ENCODE measurements at regions of chr15 and their contacts with region 1.

Region 1: GRCh38 chr15:85330901-85331588 is 49.4 kb upstream of the AKAP13 start:
- H3K4me3 ChIP-seq: no peak overlapping the region
- H3K27ac ChIP-seq: no peak overlapping the region
- H3K4me1 ChIP-seq: 0 out of 2 replicates have a peak, but pooled peaks cover 2% of the 10 kb centered on the region
- CTCF ChIP-seq: peak; percentile 27; the same call in 1 of the 2 replicates

Region 2: GRCh38 chr15:84855136-84855535 is 475.9 kb before region 1 on chr15:
- CTCF ChIA-PET with region 1: no interaction called
- POLR2A ChIA-PET with region 1: no interaction called
- H3K4me3 ChIP-seq: no peak overlapping the region
- H3K27ac ChIP-seq: no peak overlapping the region
- H3K4me1 ChIP-seq: no peaks in the 10 kb centered on the region
- CTCF ChIP-seq: no peak

Region 3: GRCh38 chr15:84981054-84981710 is 349.9 kb before region 1 on chr15:
- CTCF ChIA-PET with region 1: no interaction called
- POLR2A ChIA-PET with region 1: no interaction called
- H3K4me3 ChIP-seq: peak overlapping the region; percentile 76
- H3K27ac ChIP-seq: peak overlapping the region; percentile 77
- H3K4me1 ChIP-seq: peaks cover 21% of the 10 kb centered on the region
- CTCF ChIP-seq: peak; percentile 95

Region 4: GRCh38 chr15:85312486-85312885 is 18.6 kb before region 1 on chr15:
- CTCF ChIA-PET with region 1: interaction called, 16 read pairs
- POLR2A ChIA-PET with region 1: interaction called, 3 read pairs
- H3K4me3 ChIP-seq: no peak overlapping the region
- H3K27ac ChIP-seq: no peak overlapping the region
- H3K4me1 ChIP-seq: 0 out of 2 replicates have a peak, but pooled peaks cover 4% of the 10 kb centered on the region
- CTCF ChIP-seq: no peak

Region 5: DNA sequence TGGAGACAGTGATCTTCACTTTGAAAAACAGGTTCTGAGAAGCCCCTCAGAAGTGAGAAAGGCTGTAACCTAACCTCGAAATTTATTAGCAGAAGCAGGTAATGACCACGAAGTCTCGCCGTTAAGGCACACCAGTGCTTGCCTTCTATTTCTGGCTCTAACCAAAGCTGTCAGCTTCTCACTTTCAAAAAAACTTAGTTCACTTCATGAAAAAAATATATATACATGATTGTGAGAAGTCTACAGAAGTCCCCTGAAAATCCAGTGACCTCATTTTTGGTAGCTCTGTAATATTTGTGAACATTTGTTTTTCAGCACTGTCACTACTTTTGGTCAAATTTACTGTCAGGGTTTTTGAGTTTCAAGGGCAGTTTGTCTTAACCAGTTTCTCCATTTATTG is 30.3 kb after region 1 on chr15:
- CTCF ChIA-PET with region 1: interaction called, 11 read pairs
- POLR2A ChIA-PET with region 1: no interaction called
- H3K4me3 ChIP-seq: no peak overlapping the region
- H3K27ac ChIP-seq: no peak overlapping the region
- H3K4me1 ChIP-seq: no peaks in the 10 kb centered on the region; the same call in 1 of the 2 replicates
- CTCF ChIP-seq: no peak

Region 6: DNA sequence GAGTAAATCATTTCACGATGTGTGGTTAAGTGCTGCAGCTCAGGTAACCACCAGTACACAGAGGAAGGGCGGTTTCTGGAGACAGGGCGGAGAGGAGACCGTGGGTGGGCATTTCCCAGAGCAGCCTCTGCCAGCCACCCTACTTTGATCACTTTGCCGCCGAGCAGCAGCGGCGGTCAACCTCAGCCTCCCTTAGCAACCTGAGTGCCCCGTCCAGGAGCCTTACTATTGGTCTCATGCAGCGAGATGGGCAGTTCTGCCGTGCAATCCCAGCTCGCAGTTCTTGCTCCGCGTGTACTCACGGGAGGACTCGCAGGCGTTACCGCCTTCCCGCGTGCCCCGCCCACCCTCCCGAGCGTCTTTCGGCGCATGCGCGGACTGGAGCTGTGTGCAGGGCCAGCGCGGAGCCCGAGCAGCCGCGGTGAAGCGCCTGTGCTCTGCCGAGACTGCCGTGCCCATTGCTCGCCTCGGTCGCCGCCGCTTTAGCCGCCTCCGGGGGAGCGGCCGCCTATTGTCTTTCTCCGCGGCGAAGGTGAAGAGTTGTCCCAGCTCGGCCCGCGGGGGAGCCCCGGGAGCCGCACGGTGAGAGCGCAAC is 49.3 kb after region 1 on chr15 and contains the start of gene AKAP13:
- CTCF ChIA-PET with region 1: interaction called, 6 read pairs
- POLR2A ChIA-PET with region 1: interaction called, 12 read pairs
- H3K4me3 ChIP-seq: peak within 1 kb of the TSS; percentile 82
- H3K27ac ChIP-seq: peak within 1 kb of the TSS; percentile 83
- H3K4me1 ChIP-seq: peaks cover 20% of the 10 kb centered on the region
- CTCF ChIP-seq: no peak

Region 7: GRCh38 chr15:85402195-85402881 is 71.3 kb after region 1 on chr15:
- CTCF ChIA-PET with region 1: interaction called, 117 read pairs
- POLR2A ChIA-PET with region 1: no interaction called
- H3K4me3 ChIP-seq: no peak overlapping the region
- H3K27ac ChIP-seq: no peak overlapping the region; the same call in 1 of the 2 replicates
- H3K4me1 ChIP-seq: peaks cover 55% of the 10 kb centered on the region
- CTCF ChIP-seq: no peak

Region 8: GRCh38 chr15:85412956-85413854 is 82.2 kb after region 1 on chr15:
- CTCF ChIA-PET with region 1: interaction called, 117 read pairs
- POLR2A ChIA-PET with region 1: interaction called, 4 read pairs
- H3K4me3 ChIP-seq: no peak overlapping the region
- H3K27ac ChIP-seq: no peak overlapping the region
- H3K4me1 ChIP-seq: peaks cover 30% of the 10 kb centered on the region
- CTCF ChIP-seq: no peak; the same call in 1 of the 2 replicates

Region 9: GRCh38 chr15:85485956-85486567 is 155.0 kb after region 1 on chr15:
- CTCF ChIA-PET with region 1: interaction called, 10 read pairs
- POLR2A ChIA-PET with region 1: no interaction called
- H3K4me3 ChIP-seq: no peak overlapping the region
- H3K27ac ChIP-seq: no peak overlapping the region
- H3K4me1 ChIP-seq: peaks cover 6% of the 10 kb centered on the region
- CTCF ChIP-seq: peak; percentile 49; the same call in 1 of the 2 replicates

Region 10: DNA sequence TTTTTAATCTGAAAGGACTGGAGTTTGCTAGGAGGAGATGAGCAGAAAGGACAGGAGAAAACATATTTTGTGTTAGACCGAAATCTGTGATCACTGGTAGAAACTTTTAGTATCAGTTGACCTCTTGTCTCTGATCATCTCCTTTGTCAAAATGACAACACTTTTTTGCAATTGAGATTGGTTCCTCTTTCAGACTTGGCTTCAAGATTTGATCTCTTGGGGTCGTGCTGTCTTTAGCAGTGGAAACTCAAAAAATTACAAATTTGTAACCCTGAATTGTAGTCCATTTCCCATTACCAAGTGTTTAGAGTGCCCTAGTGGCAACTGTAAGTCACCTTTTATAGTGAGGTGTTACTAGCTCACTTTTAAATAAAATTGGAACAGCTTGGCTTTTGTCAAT is 356.3 kb after region 1 on chr15:
- CTCF ChIA-PET with region 1: no interaction called
- POLR2A ChIA-PET with region 1: no interaction called
- H3K4me3 ChIP-seq: no peak overlapping the region
- H3K27ac ChIP-seq: no peak overlapping the region
- H3K4me1 ChIP-seq: no peaks in the 10 kb centered on the region
- CTCF ChIP-seq: no peak